Activated CD8-positive, alpha-beta T cell treated with anti-CD3 and anti-CD28 coated beads for 36 hours (primary cell): ENCODE measurements at regions of chr3 and their contacts with region 1.

Region 1: DNA sequence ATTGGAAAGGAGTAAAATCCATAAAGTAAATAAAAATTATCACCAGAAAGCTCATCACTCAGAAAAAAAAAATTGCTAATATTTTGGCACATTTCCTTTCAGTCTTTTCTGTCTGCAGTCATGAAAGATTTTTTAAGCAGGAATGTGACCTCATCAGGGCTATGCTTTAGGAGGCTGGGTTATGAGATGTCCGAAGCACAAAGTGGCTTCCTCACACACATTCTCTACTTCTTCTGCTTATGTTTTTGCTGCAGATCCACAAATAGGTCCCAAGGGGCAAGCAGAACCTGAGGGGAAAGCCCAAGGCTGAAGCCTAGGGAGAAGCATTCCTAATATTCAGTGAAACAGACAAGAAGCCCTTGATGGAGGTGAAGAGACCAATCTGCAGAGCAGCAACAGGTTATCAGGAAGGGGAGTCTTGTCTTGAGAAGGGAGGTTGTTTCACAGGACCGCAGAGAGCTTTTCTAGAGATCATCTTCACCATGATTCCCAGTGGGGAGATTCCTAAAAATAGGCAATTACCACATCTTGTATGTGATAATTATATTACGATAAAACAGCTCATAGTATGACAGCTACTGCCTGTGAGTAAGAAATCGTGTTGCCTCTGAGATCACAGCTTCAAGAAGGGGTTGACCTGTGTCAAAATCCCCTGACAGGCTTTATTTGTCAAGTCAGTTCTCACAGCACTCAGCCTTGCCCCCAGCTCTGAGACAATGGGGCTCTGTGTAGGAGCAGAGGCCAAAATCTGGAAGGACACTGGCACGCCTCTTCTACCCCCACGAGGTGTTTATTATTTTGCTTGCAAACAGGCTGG is 60.5 kb downstream of the IGF2BP2 start:
- DNase-seq: no peak
- ATAC-seq: no peak
- H3K4me3 Mint-ChIP-seq: no peak overlapping the region
- H3K27ac Mint-ChIP-seq: no peak overlapping the region
- H3K4me1 Mint-ChIP-seq: no peaks in the 10 kb centered on the region
- H3K27me3 Mint-ChIP-seq: peaks cover 19% of the 10 kb centered on the region
- CTCF ChIP-seq: no peak

Region 2: GRCh38 chr3:185677146-185677829 is 87.1 kb before region 1 on chr3:
- CTCF ChIA-PET with region 1: interaction called, 20 read pairs
- POLR2A ChIA-PET with region 1: no interaction called
- intact Hi-C with region 1: loop called (anchors 5 kb)
- DNase-seq: no peak
- ATAC-seq: peak; percentile 51
- H3K4me3 Mint-ChIP-seq: no peak overlapping the region
- H3K27ac Mint-ChIP-seq: no peak overlapping the region
- H3K4me1 Mint-ChIP-seq: no peaks in the 10 kb centered on the region
- H3K27me3 Mint-ChIP-seq: peaks cover 5% of the 10 kb centered on the region
- CTCF ChIP-seq: peak; percentile 42

Region 3: DNA sequence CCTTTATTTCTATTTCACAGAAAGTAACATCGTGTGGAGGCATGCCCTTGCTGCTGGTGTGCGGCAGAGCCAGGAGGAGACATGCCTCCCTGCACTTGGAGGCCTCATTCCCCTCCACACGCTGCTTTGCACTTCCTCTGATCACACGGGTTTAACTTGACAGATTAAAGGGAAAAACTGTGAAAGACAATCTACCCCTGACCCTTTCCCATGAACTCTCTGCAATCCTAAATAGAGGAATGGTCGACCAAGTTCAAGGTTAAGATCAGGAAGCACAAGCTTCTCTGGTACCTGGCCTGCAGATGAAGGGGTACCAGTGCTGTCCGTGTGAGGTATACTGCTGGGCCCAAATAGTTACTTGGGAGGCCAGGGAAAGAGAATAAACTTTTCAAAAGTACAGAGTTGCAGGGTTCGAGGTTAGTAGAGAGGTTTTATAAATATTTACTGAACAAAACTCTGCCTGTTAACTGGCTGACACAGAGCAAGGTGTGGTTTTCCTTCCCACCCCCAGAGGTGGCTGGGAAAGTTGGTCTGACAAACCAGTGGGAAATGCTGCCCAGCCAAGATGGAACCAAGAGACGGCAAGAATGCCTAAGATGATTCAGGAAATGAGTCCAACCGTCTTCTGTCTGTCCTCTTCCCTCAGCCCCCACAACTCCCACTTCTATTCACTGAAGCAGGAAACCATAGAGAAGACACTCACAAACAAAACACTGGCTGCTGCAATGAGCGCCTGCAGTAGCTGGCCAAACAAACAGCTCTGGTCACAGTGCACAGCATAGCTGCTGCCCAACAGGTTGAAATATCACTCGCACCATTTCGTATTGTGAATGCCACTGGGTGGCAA is 19.2 kb before region 1 on chr3:
- CTCF ChIA-PET with region 1: interaction called, 12 read pairs
- POLR2A ChIA-PET with region 1: no interaction called
- intact Hi-C with region 1: no loop called
- DNase-seq: no peak
- ATAC-seq: no peak
- H3K4me3 Mint-ChIP-seq: no peak overlapping the region
- H3K27ac Mint-ChIP-seq: no peak overlapping the region
- H3K4me1 Mint-ChIP-seq: peaks cover 4% of the 10 kb centered on the region
- H3K27me3 Mint-ChIP-seq: peaks cover 8% of the 10 kb centered on the region
- CTCF ChIP-seq: no peak

Region 4: DNA sequence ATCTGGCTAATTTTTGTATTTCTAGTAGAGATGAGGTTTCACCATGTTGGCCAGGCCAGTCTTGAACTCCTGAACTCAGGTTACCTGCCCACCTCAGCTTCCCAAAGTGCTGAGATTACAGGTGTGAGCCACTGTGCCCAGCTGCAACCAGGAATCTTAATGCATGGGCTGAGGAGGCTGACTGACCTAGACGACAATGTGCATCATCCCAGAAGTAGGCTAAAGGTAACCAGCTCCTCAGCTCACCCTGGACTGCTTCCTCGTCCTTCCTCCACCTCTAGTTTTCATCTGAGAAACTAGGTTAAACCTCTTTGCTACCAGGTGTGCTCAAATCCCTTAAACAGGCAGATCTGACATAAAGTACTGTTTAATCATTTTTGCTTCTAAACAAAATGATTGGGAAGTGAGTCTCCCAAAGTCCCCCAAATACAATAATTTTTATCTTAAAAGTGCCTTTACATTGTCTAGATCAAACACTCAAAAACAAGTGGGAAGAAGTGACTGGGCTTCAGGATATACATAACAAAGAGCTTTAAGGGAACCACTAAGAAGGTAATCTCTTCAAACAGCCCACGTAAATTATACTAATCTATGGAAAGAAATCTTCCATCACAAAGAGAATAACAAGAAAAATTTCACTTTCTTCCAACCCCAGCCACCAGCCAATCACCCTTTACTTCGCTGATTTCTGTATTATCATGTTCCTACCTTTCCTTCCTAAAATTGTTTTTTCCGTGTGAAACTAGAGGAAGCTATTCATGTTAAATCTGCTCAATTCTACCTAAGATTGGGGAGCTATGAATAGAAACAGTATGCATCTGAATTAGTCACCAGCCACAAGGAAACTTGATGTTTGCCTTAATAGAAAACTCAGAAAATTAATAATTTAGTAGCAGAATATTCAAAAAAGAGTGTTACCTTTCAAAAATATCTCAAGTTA is 25.8 kb after region 1 on chr3:
- CTCF ChIA-PET with region 1: interaction called, 28 read pairs
- POLR2A ChIA-PET with region 1: no interaction called
- intact Hi-C with region 1: no loop called
- DNase-seq: no peak
- ATAC-seq: no peak
- H3K4me3 Mint-ChIP-seq: no peak overlapping the region
- H3K27ac Mint-ChIP-seq: no peak overlapping the region
- H3K4me1 Mint-ChIP-seq: peaks cover 6% of the 10 kb centered on the region
- H3K27me3 Mint-ChIP-seq: no peaks in the 10 kb centered on the region
- CTCF ChIP-seq: no peak